Heart left ventricle (tissue), 16 donors: ENCODE measurements at regions of chr2 and their contacts with region 1.

Region 1: GRCh38 chr2:46706264-46706983 is 209.2 kb downstream of the MCFD2 start:
- DNase-seq: no peak
- ATAC-seq: no peak
- H3K4me3 ChIP-seq: no peak overlapping the region
- H3K27ac ChIP-seq: peak overlapping the region in 2 of 12 donors; percentile 8 to 21
- H3K4me1 ChIP-seq: peaks cover 0 to 84% (median 52%) of the 10 kb centered on the region in 12 donors
- H3K27me3 ChIP-seq: no peaks in the 10 kb centered on the region
- CTCF ChIP-seq: no peak
- POLR2A ChIP-seq: no peak

Region 2: DNA sequence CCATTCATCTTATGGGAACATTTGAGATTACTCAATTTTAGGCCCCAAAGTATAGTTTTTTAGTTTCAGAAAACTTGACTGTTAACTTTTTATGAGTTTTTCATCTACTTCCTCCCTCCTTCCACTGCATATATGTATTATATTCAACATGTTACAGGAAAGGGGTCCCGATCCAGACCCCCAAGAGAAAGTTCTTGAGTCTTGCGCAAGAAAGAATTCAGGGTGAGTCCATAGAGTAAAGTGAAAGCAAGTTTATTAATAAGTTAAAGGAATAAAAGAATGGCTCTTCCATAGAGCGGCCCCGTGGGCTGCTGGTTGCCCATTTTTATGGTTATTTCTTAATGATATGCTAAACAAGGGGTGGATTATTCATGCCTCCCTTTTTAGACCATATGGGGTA is 36.6 kb after region 1 on chr2:
- intact Hi-C with region 1: loop called in 3 of 10 experiments (anchors 5 kb)
- DNase-seq: no peak
- ATAC-seq: no peak
- H3K4me3 ChIP-seq: no peak overlapping the region
- H3K27ac ChIP-seq: no peak overlapping the region
- H3K4me1 ChIP-seq: peaks cover 0 to 36% (median 15%) of the 10 kb centered on the region in 12 donors
- H3K27me3 ChIP-seq: no peaks in the 10 kb centered on the region
- CTCF ChIP-seq: no peak
- POLR2A ChIP-seq: no peak

Region 3: DNA sequence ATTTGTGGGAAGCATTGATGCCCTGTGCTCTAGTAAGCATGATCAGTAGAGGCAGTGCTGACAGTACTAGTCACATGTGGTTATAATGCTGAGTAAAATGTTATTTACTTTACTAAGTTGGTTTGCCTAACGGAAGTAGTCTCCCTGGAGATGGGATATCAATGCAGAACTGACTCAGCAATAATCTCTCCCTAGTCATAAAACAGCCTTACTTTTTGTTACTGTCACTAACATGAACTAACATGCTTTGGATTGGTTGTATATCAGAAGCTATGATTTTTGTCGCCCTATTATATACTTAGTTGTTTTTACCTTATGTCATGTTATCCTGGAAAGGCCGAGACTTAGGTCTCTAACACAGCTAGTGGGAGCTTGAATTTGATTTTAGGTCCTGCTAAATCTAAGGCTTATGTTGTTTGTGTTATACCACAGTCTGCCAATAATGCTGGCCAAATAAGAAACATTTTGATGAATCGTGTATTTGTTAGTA is 42.7 kb after region 1 on chr2:
- intact Hi-C with region 1: loop called in 4 of 10 experiments (anchors 5 kb)
- DNase-seq: no peak
- ATAC-seq: peak in 3 of 4 donors; percentile 39 to 62 (median 51)
- H3K4me3 ChIP-seq: no peak overlapping the region
- H3K27ac ChIP-seq: peak overlapping the region in 1 of 12 donors; percentile 17
- H3K4me1 ChIP-seq: peaks cover 5 to 64% (median 44%) of the 10 kb centered on the region in 12 donors
- H3K27me3 ChIP-seq: no peaks in the 10 kb centered on the region
- CTCF ChIP-seq: no peak
- POLR2A ChIP-seq: no peak

Region 4: DNA sequence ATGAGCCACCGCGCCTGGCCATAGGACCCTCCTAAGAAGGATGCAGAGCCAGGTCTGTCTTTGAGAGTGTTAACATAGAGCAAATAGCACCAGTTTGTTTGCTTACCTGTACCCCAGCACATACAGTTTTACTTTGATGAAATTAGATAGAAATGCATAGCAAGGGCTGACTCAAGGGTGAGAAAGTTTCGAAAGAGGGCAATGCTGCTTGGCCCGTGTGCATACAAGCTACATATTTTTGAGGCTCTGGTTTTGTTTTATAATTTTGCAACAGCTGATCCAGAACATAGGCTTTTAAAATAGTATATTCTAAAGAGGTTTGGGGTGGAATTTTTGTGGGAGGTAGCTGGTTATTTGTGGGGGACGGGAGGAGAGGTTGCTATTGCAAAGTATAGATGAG is 57.4 kb after region 1 on chr2:
- intact Hi-C with region 1: loop called in 2 of 10 experiments (anchors 5 to 10 kb)
- DNase-seq: no peak
- ATAC-seq: no peak
- H3K4me3 ChIP-seq: no peak overlapping the region
- H3K27ac ChIP-seq: no peak overlapping the region
- H3K4me1 ChIP-seq: peaks cover 0 to 10% (median 0%) of the 10 kb centered on the region in 12 donors
- H3K27me3 ChIP-seq: no peaks in the 10 kb centered on the region
- CTCF ChIP-seq: no peak
- POLR2A ChIP-seq: no peak

Region 5: GRCh38 chr2:47198985-47199451 is 492.6 kb after region 1 on chr2:
- intact Hi-C with region 1: no loop called
- DNase-seq: no peak
- ATAC-seq: no peak
- H3K4me3 ChIP-seq: no peak overlapping the region
- H3K27ac ChIP-seq: no peak overlapping the region
- H3K4me1 ChIP-seq: peaks cover 0 to under 1% (median 0%) of the 10 kb centered on the region in 12 donors
- H3K27me3 ChIP-seq: no peaks in the 10 kb centered on the region
- CTCF ChIP-seq: no peak
- POLR2A ChIP-seq: no peak